GM23248 (cell line): ENCODE measurements at regions of chr11 and their contacts with region 1.

Region 1: GRCh38 chr11:44621140-44621681 is 55.7 kb downstream of the CD82 start:
- DNase-seq: peak; percentile 75
- H3K4me3 ChIP-seq: peak overlapping the region; percentile 56
- H3K27ac ChIP-seq: no peak overlapping the region
- H3K4me1 ChIP-seq: no peaks in the 10 kb centered on the region
- H3K27me3 ChIP-seq: no peaks in the 10 kb centered on the region

Region 2: DNA sequence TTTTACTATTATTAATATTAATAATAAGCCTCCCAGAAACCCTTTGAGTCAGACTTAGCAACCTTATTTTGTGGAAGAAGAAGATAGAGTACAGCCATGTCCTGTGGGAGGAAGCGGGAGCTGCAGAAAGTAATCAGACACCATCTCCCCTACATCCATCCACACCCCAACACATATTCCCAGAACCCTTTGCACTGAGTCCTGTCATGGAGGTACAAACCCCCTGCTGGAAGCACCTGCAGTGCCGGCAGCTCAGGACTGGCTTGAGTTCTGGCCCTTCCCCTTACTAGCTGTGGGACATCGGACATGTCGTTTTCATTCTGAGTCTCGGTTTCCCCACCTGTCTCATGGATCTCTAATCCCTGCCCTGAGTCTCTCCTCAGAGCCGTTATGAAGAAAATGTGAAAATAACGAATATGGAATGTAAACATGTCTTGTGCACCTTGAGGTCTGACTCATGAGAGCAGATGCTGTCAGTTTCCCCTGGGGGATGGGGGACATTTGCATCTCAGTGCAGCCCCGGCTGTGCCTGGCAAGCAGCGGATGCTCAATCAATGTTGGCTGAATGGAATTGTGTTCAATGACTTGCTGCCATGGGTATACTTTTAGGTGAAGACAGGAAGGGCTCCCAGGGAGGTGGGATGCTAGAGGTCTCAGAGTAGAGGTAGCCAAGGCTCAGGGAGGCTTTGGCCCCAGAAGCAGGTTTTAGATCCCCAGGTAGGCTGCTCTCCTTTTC is 284.1 kb after region 1 on chr11:
- in situ Hi-C with region 1: loop called (anchors 5 kb)
- DNase-seq: no peak
- H3K4me3 ChIP-seq: no peak overlapping the region
- H3K27ac ChIP-seq: no peak overlapping the region
- H3K4me1 ChIP-seq: no peaks in the 10 kb centered on the region
- H3K27me3 ChIP-seq: peaks cover 15% of the 10 kb centered on the region